CD14-positive monocyte (primary cell): ENCODE measurements at regions of chr22 and their contacts with region 1.

Region 1: GRCh38 chr22:27810609-27811151 is 9.1 kb upstream of the MN1 start:
- DNase-seq: no peak
- H3K4me3 ChIP-seq: no peak overlapping the region
- H3K4me3 Mint-ChIP-seq: no peak overlapping the region
- H3K27ac ChIP-seq: no peak overlapping the region
- H3K27ac Mint-ChIP-seq: no peak overlapping the region
- H3K4me1 ChIP-seq: no peaks in the 10 kb centered on the region
- H3K4me1 Mint-ChIP-seq: no peaks in the 10 kb centered on the region
- H3K27me3 ChIP-seq: no peaks in the 10 kb centered on the region
- H3K27me3 Mint-ChIP-seq: peaks cover 1 to 20% (median 7%) of the 10 kb centered on the region in 3 donors
- CTCF ChIP-seq: no peak

Region 2: GRCh38 chr22:26763633-26764361 is 1046.9 kb before region 1 on chr22:
- intact Hi-C with region 1: loop called in 1 of 2 experiments (anchors 10 kb)
- DNase-seq: no peak
- H3K4me3 ChIP-seq: no peak overlapping the region
- H3K4me3 Mint-ChIP-seq: no peak overlapping the region
- H3K27ac ChIP-seq: no peak overlapping the region
- H3K27ac Mint-ChIP-seq: no peak overlapping the region
- H3K4me1 ChIP-seq: no peaks in the 10 kb centered on the region
- H3K4me1 Mint-ChIP-seq: no peaks in the 10 kb centered on the region
- H3K27me3 ChIP-seq: no peaks in the 10 kb centered on the region
- H3K27me3 Mint-ChIP-seq: peaks cover 0 to 1% (median 0%) of the 10 kb centered on the region in 3 donors
- CTCF ChIP-seq: no peak

Region 3: DNA sequence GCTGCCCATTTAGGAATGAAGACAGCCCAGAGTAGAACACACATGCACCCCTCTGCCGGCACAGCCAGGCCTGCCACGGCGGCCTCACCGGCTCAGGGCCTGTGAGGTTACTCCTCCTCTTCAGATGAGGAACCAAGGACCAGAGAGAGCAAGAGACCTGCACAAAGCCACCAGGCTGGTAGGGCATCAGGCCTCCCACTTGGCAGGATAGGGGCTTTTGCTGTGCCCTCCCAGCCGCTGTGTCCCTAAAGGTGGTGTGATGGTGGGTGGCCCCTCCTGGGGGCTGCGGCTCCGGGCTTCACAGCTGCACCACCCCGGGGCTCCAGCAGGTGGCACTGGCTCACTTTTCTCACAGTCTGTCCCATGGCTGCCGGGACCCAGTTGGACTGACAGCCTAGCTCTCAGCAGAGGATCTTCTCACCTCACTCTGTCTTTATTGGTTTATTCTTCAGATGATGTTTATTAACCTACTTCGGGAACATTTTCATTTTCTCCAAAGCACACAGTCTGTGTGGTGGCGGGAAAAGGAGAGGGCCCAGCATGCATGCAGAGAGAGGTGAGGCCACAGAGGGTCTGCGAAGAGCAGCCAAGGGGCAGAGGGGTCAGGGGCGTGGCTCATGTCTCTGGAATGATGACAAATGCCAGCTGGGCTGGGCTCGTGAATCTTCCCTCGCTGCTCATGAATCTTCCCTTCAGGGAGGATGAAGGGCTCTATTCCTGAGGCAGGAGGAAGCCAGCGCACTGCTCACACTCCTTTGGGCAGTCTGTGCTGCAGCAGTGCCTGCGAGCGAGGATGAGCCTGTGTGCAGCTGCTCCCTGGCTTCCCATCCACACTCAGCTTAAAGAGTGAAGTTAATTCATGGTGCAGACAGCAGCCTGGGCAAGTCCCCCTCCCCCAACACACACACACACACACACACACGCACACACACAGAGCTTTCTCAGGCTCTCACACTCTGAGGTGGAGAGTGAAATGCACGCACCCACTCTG is 209.5 kb after region 1 on chr22:
- intact Hi-C with region 1: no loop called
- DNase-seq: peak; percentile 9 to 44 (median 31)
- H3K4me3 ChIP-seq: no peak overlapping the region
- H3K4me3 Mint-ChIP-seq: no peak overlapping the region
- H3K27ac ChIP-seq: no peak overlapping the region
- H3K27ac Mint-ChIP-seq: peak overlapping the region in 1 of 7 donors; percentile 50
- H3K4me1 ChIP-seq: no peaks in the 10 kb centered on the region
- H3K4me1 Mint-ChIP-seq: no peaks in the 10 kb centered on the region
- H3K27me3 ChIP-seq: no peaks in the 10 kb centered on the region
- H3K27me3 Mint-ChIP-seq: peaks cover 0 to 3% (median 2%) of the 10 kb centered on the region in 3 donors
- CTCF ChIP-seq: peak; percentile 96